SK-N-SH (cell line): ENCODE measurements at regions of chr18 and their contacts with region 1.

Region 1: GRCh38 chr18:63518178-63519012 is 23.8 kb upstream of the SERPINB12 start:
- DNase-seq: peak; percentile 35
- H3K4me3 ChIP-seq: no peak overlapping the region; a peak in 1 of 4 replicates
- H3K27ac ChIP-seq: no peak overlapping the region
- H3K4me1 ChIP-seq: no peaks in the 10 kb centered on the region
- H3K27me3 ChIP-seq: peaks cover 46% of the 10 kb centered on the region
- CTCF ChIP-seq: peak; percentile 80
- EP300 ChIP-seq: no peak
- RAD21 ChIP-seq: peak; percentile 85

Region 2: GRCh38 chr18:63454497-63454896 is 63.9 kb before region 1 on chr18:
- CTCF ChIA-PET with region 1: no interaction called
- POLR2A ChIA-PET with region 1: no interaction called
- DNase-seq: no peak
- H3K4me3 ChIP-seq: no peak overlapping the region
- H3K27ac ChIP-seq: no peak overlapping the region
- H3K4me1 ChIP-seq: no peaks in the 10 kb centered on the region
- H3K27me3 ChIP-seq: no peaks in the 10 kb centered on the region
- CTCF ChIP-seq: no peak
- EP300 ChIP-seq: no peak
- RAD21 ChIP-seq: no peak

Region 3: DNA sequence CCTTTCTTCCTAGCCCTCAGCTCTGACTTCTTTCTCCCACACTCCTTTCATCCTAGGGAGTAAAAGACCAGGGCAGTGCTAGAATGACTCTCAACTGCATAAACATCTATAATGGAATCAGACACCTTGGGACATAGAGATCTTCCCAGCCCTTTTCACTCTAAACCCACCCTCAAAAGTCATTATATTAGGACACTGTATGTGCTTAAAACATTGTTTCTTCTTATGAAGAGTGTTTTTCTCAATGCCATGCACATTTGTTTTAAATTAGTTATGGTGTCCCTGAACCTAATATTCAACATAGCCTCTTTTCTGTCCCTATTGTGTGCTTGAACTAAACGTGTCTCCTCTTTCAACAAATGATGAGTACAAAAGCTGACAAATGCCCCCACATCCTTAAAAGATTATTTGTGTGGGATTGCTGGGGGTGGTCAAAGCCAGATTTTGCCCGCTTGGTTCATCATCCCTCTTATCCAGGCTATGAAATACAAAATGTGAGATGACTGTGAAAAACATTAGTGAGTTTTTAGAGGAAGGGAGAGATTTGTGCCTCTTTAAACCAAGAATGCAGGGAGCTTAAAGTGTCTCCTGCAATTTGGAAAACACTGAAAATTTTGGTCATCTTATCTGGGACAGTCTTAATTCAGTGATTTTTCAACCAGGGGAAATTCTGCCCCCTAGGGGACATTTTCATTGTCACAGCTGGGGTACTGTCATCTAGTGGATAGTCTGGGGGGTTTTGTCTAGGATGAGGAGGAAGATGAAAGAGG is 12.6 kb before region 1 on chr18:
- CTCF ChIA-PET with region 1: interaction called, 41 read pairs
- POLR2A ChIA-PET with region 1: no interaction called
- DNase-seq: peak; percentile 16
- H3K4me3 ChIP-seq: no peak overlapping the region
- H3K27ac ChIP-seq: no peak overlapping the region
- H3K4me1 ChIP-seq: peaks cover 0 to 3% of the 10 kb centered on the region in 2 experiments; a peak in 1 of 4 replicates
- H3K27me3 ChIP-seq: peaks cover 20% of the 10 kb centered on the region; the same call in 1 of the 2 replicates
- CTCF ChIP-seq: peak; percentile 59
- EP300 ChIP-seq: no peak
- RAD21 ChIP-seq: no peak

Region 4: DNA sequence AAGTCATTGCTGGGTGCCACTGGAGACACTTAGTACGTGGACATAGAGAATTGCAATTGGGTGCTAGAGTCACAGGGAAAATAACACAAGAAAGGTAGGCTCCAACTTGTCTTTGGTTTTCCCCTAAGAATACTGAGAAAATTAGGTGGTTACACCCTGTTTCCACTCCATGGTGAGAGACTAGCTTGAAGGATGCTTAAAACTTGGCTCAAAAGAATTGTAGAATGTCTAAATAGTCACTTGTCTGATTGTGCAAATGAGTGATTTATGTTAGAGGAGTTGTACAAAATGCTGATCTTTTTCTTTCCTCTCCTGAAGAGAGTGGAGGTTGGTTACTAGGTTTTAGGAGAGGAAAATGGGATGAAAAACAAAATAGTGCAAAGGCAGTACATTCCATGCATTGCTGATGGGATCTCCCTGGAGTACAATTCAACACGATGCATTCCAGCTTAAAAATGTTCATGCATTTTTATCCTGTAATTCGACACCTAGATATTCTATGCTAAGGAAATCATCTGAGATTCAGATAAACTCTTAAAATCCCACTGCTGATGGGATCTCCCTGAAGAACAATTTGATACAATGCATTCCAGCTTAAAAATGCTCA is 21.6 kb after region 1 on chr18:
- CTCF ChIA-PET with region 1: interaction called, 13 read pairs
- POLR2A ChIA-PET with region 1: no interaction called
- DNase-seq: no peak
- H3K4me3 ChIP-seq: no peak overlapping the region
- H3K27ac ChIP-seq: no peak overlapping the region
- H3K4me1 ChIP-seq: no peaks in the 10 kb centered on the region; a peak in 1 of 4 replicates
- H3K27me3 ChIP-seq: no peaks in the 10 kb centered on the region
- CTCF ChIP-seq: no peak
- EP300 ChIP-seq: no peak
- RAD21 ChIP-seq: no peak

Region 5: DNA sequence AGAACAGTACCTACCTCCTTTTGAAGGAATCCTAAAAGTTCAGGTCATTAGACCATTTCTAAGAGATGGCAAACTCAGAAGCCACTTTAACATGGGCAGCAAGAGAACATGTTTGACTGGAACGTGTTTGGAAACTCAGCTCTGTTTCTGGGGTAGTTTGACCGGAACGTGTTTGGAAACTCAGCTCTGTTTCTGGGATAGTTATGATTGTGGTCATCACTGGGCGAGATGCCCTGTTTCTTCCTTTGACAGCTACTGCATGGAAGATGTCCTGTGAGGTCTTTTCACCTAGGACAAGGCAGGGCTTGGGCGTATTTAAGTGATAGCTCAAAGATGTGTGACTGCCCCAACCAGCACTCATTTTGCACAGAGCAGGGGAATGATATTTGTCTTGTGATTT is 48.9 kb after region 1 on chr18:
- CTCF ChIA-PET with region 1: interaction called, 13 read pairs
- POLR2A ChIA-PET with region 1: no interaction called
- DNase-seq: no peak
- H3K4me3 ChIP-seq: no peak overlapping the region
- H3K27ac ChIP-seq: no peak overlapping the region
- H3K4me1 ChIP-seq: no peaks in the 10 kb centered on the region
- H3K27me3 ChIP-seq: peaks cover 16% of the 10 kb centered on the region; the same call in 1 of the 2 replicates
- CTCF ChIP-seq: no peak
- EP300 ChIP-seq: no peak
- RAD21 ChIP-seq: no peak

Region 6: DNA sequence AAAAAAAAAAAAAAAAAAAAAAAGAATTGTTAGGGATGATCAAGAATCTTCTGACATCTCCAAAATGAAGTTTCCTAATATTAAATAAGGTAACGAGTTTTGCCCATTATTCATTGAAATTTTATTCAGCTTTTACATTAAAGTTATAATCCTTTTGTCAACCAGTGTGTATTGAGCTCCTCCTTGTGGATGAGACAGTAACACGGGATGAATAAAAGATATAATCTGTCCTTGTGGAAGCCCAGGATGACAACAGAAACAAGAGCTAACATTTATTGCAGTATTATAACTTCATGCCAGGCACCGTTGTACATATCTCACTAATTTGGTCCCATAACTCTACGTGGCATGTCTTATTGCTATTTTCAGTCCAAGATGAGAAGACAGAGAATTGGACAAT is 223.4 kb after region 1 on chr18:
- CTCF ChIA-PET with region 1: interaction called, 10 read pairs
- POLR2A ChIA-PET with region 1: no interaction called
- DNase-seq: no peak
- H3K4me3 ChIP-seq: no peak overlapping the region
- H3K27ac ChIP-seq: no peak overlapping the region
- H3K4me1 ChIP-seq: no peaks in the 10 kb centered on the region
- H3K27me3 ChIP-seq: no peaks in the 10 kb centered on the region
- CTCF ChIP-seq: peak; percentile 69
- EP300 ChIP-seq: no peak
- RAD21 ChIP-seq: peak; percentile 57

Region 7: DNA sequence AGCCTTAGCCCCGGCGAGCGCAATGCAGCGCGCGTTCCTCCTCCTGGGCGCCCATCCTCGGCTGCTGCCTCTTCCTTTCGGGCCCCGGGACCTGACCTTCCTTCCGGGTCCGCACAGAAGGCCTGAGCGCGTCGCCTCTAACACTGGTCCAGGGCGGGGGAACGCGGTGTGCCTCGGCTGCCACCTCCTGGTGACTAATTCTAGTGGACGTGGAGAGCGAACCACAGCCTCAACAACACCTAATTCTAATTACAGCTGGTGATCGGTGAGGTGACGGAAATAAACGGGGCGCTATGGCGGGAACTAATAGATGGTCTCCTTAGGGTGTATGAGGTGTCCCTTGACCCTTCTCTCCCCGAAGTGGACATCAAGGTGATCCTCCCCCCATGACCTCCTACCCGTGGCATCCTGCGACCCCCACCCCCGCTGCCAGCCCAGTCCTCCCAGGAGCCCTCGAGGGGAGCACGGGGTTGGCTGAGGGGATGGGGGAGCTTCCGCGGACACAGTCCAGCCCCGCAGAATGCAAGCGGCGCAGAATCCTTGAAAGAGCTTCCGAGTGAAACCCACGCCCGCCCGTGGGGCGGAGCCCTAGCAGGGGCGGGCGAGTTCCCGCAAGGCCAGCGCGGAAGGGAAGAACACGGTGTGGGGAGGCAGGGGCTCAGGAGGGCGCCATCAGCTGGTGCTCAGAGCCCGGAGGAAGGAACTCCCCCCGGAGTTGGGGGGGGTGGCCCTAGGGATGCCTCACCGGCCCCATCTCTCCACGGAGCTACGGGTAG is 417.9 kb after region 1 on chr18:
- CTCF ChIA-PET with region 1: interaction called, 19 read pairs
- POLR2A ChIA-PET with region 1: no interaction called
- DNase-seq: peak; percentile 85
- H3K4me3 ChIP-seq: peak overlapping the region; percentile 53 to 62
- H3K27ac ChIP-seq: no peak overlapping the region
- H3K4me1 ChIP-seq: peaks cover 0 to 9% of the 10 kb centered on the region in 2 experiments; a peak in 2 of 4 replicates
- H3K27me3 ChIP-seq: peaks cover 19% of the 10 kb centered on the region; the same call in 1 of the 2 replicates
- CTCF ChIP-seq: peak; percentile 63
- EP300 ChIP-seq: no peak
- RAD21 ChIP-seq: peak; percentile 67